CD4-positive, alpha-beta T cell (primary cell): ENCODE measurements at regions of chr2 and their contacts with region 1.

Region 1: DNA sequence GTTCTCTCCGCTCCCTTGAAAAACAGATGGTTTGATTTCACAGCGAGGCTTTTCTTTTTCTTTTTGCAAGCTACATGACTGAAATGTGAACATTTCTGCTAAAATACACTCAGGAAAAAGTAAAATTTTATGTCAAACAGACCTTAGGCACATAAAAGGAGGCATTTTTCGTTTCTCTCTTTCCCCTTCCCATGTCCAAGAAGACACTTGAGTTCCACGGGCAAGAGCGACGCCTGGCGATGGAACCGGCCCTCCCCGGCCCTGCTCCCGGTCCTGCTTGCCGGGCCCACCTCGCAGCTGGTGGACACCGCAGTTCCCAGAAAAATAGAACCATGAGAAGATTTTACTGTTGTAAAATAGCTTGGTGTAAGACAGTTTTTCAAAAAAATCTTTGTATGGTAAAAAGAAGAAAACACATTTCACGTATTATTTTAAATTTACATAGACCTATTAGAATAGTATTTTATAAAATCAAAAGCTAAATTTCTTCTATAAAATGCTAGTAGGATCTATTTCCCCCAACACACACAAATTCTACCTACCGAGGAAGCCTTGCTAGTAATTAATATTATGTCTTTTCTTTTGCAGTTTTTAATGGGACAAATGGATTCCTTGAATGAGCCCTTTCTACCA is 2.3 kb upstream of the ALKAL2 start:
- DNase-seq: peak; percentile 18 to 70 (median 49)
- ATAC-seq: peak; percentile 51
- H3K4me3 ChIP-seq: peak overlapping the region; percentile 25
- H3K4me3 Mint-ChIP-seq: peak overlapping the region; percentile 81
- H3K27ac ChIP-seq: no peak overlapping the region
- H3K27ac Mint-ChIP-seq: no peak overlapping the region
- H3K4me1 ChIP-seq: peaks cover 17% of the 10 kb centered on the region
- H3K4me1 Mint-ChIP-seq: peaks cover 16% of the 10 kb centered on the region
- H3K27me3 ChIP-seq: peaks cover 39 to 40% of the 10 kb centered on the region in 2 experiments
- H3K27me3 Mint-ChIP-seq: peaks cover 65% of the 10 kb centered on the region
- CTCF ChIP-seq: peak; percentile 76

Region 2: DNA sequence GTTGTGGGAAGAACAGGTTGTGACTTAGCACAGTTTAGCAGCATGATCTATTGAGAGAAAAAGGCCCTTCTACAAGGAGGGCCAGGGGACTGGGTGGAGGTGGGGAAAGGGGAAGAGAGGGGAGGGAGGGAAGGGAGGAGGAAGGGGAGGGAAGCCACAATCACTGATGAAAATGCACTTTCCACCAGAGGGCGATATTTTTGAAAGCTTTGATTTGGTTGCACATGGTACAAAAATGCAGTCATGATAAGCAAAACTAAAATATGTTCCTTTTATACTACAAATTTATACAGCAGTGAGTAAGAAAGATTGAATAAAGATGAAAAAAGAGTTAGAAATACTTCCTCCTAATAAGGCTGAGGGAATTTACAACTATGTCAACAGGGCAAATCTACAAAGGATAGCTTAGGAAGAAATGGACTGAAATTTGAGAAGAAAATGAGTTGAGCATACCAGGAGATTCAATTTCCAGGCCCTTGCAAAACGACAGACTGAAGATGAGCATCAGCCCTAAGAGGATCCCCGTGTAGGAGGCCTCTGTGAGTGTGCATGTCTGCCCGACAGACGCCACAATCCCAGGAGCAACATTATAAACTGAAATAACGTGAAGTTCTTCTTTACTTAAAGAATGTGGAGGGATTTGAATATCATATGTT is 43.6 kb before region 1 on chr2:
- CTCF ChIA-PET with region 1: interaction called, 4 read pairs
- POLR2A ChIA-PET with region 1: no interaction called
- intact Hi-C with region 1: loop called in 1 of 2 experiments (anchors 1 kb)
- DNase-seq: peak in 9 of 14 experiments; percentile 5 to 75 (median 14)
- ATAC-seq: peak; percentile 60
- H3K4me3 ChIP-seq: no peak overlapping the region
- H3K4me3 Mint-ChIP-seq: no peak overlapping the region
- H3K27ac ChIP-seq: no peak overlapping the region
- H3K27ac Mint-ChIP-seq: no peak overlapping the region
- H3K4me1 ChIP-seq: no peaks in the 10 kb centered on the region
- H3K4me1 Mint-ChIP-seq: peaks cover 7% of the 10 kb centered on the region
- H3K27me3 ChIP-seq: no peaks in the 10 kb centered on the region
- H3K27me3 Mint-ChIP-seq: no peaks in the 10 kb centered on the region
- CTCF ChIP-seq: peak; percentile 79

Region 3: DNA sequence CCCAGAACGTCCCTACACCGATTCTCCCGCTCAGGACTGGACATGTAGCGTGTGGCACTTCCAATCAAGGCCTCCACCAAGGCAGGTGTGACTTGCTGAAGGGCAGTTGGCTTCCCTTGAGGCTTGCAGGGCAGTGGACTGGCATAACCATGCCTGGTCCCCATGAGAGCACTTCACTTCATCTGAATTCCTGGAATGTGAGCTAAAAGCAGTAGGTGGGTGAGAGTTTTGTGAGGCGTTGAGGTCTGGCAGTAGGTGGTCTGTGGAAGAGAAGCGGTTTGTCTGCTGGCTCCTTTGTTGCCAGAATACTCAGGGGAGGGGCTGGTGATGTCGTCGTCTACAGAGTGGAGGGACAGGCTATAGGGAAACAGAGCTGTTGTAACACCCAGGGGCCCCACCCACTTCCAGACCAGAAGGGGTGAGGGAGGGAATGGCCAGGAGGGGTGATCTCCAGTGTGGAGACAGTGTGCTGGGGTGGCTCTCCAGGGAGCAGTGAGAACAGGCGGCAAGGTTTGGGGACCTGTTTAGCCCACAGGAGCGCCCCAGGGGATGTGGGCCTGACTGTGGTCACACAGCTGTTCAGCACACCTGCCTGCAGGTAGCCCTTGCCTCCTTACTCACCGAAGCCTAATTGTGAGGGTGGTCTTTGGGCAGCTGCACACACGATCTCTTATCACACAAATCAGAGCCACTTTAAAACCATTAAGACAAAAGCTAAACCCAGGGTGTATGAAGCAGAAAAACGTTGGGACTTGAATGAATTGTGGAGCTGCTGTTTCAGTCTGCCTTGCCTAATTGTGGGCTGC is 19.1 kb after region 1 on chr2:
- CTCF ChIA-PET with region 1: no interaction called
- POLR2A ChIA-PET with region 1: no interaction called
- intact Hi-C with region 1: no loop called
- DNase-seq: no peak
- ATAC-seq: no peak
- H3K4me3 ChIP-seq: no peak overlapping the region
- H3K4me3 Mint-ChIP-seq: no peak overlapping the region
- H3K27ac ChIP-seq: no peak overlapping the region
- H3K27ac Mint-ChIP-seq: no peak overlapping the region
- H3K4me1 ChIP-seq: no peaks in the 10 kb centered on the region
- H3K4me1 Mint-ChIP-seq: no peaks in the 10 kb centered on the region
- H3K27me3 ChIP-seq: no peaks in the 10 kb centered on the region
- H3K27me3 Mint-ChIP-seq: peaks cover 11% of the 10 kb centered on the region
- CTCF ChIP-seq: no peak